Left ventricle myocardium superior (tissue), 1 donor: ENCODE measurements at regions of chr18 and their contacts with region 1.

Region 1: GRCh38 chr18:47204908-47205522 is 28.9 kb upstream of the IER3IP1 start:
- DNase-seq: no peak
- ATAC-seq: peak; percentile 55

Region 2: GRCh38 chr18:47113796-47114540 is 91.0 kb before region 1 on chr18:
- intact Hi-C with region 1: loop called (anchors 5 kb)
- DNase-seq: no peak
- ATAC-seq: no peak